Esophagus squamous epithelium (tissue), 5 donors: ENCODE measurements at regions of chr1 and their contacts with region 1.

Region 1: GRCh38 chr1:246450611-246451251 is 56.3 kb downstream of the SMYD3 start:
- DNase-seq: no peak
- H3K4me3 ChIP-seq: no peak overlapping the region
- H3K27ac ChIP-seq: no peak overlapping the region
- H3K4me1 ChIP-seq: peaks cover 0 to 27% (median 0%) of the 10 kb centered on the region in 3 donors
- H3K27me3 ChIP-seq: no peaks in the 10 kb centered on the region
- CTCF ChIP-seq: peak in 5 of 6 experiments; percentile 42 to 78 (median 58)
- POLR2A ChIP-seq: no peak

Region 2: DNA sequence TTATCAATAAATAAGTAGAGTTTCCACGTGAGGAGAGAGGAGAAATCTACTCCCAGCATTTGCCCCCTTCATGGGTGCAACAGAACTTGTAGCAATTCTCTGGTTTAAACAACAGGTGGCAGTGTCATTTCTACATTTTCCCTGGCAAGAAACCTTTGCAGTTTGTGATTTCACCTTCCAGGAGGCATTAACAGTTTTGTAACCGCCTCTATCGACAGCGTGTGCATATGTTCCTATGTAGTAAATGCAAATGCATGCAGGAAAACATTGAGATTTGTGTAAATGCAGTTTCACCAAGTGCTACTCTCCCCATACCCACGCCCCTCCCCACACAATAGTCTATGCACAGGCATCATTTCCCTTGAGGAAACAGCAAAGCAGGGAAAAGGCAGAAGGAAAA is 438.4 kb before region 1 on chr1:
- intact Hi-C with region 1: loop called (anchors 10 kb)
- DNase-seq: no peak
- H3K4me3 ChIP-seq: no peak overlapping the region
- H3K27ac ChIP-seq: no peak overlapping the region
- H3K4me1 ChIP-seq: peaks cover 0 to 17% (median 0%) of the 10 kb centered on the region in 3 donors
- H3K27me3 ChIP-seq: no peaks in the 10 kb centered on the region
- CTCF ChIP-seq: peak in 5 of 6 experiments; percentile 47 to 64 (median 50)
- POLR2A ChIP-seq: no peak

Region 3: GRCh38 chr1:246338546-246338945 is 112.2 kb before region 1 on chr1:
- intact Hi-C with region 1: no loop called
- DNase-seq: no peak
- H3K4me3 ChIP-seq: no peak overlapping the region
- H3K27ac ChIP-seq: no peak overlapping the region
- H3K4me1 ChIP-seq: no peaks in the 10 kb centered on the region
- H3K27me3 ChIP-seq: no peaks in the 10 kb centered on the region
- CTCF ChIP-seq: no peak
- POLR2A ChIP-seq: no peak

Region 4: DNA sequence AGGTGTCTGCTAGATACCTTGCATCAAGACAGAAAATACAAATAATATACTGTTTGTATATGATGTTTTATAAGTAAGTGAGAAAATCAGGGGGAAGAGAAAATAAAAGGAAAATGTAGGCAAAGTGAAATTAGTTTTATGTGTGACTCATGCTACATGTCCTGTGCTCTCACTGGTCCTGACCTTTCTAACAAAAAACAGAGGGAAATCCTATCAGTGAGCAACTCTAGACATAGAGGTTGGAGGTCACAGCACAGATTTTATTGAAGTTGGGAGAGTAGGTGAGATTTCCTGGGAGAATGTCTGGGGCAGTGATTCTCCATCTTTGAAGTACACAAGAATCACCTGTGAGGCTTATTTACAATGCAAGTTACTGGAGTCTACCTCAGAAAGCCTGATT is 283.0 kb after region 1 on chr1:
- intact Hi-C with region 1: no loop called
- DNase-seq: no peak
- H3K4me3 ChIP-seq: no peak overlapping the region
- H3K27ac ChIP-seq: no peak overlapping the region
- H3K4me1 ChIP-seq: no peaks in the 10 kb centered on the region
- H3K27me3 ChIP-seq: no peaks in the 10 kb centered on the region
- CTCF ChIP-seq: no peak
- POLR2A ChIP-seq: no peak